ENCODE measurements at regions of chr15 and their contacts with region 1.

Region 1: GRCh38 chr15:42207674-42208579 is at the start of gene VPS39:
- DNase-seq: peak; percentile 86
- ATAC-seq: peak; percentile 97
- H3K4me3 ChIP-seq: peak within 1 kb of the TSS; percentile 83 to 97 (median 92)
- H3K4me3 Mint-ChIP-seq: peak within 1 kb of the TSS; percentile 85
- H3K27ac ChIP-seq: peak within 1 kb of the TSS; percentile 59 to 91
- H3K27ac Mint-ChIP-seq: peak within 1 kb of the TSS; percentile 91
- H3K4me1 ChIP-seq: peaks cover 20 to 22% of the 10 kb centered on the region in 2 donors
- H3K4me1 Mint-ChIP-seq: peaks cover 36% of the 10 kb centered on the region
- H3K27me3 ChIP-seq: no peaks in the 10 kb centered on the region
- H3K27me3 Mint-ChIP-seq: no peaks in the 10 kb centered on the region
- CTCF ChIP-seq: no peak
- total RNA-seq, gene VPS39: 145 and 149 TPM in 2 replicates

Region 2: DNA sequence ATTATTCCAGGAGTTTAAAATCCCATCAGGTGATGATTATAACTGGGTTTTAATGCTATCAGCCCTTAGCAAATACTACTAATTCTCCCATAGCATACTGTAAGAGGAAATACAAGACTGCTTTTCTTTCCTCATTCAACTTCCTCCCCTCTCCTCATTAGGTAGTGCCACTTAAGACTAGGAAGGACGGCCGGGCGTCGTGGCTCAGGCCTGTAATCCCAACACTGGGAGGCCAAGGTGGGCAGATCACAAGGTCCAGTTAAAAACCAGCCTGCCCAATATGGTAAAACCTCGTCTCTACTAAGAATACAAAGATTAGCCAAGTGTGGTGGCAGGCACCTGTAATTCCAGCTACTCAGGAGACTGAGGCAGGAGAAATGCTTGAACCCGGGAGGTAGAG is 820.3 kb before region 1 on chr15:
- CTCF ChIA-PET with region 1: no interaction called
- POLR2A ChIA-PET with region 1: no interaction called
- intact Hi-C with region 1: no loop called
- DNase-seq: no peak
- ATAC-seq: no peak
- H3K4me3 ChIP-seq: no peak overlapping the region
- H3K4me3 Mint-ChIP-seq: no peak overlapping the region
- H3K27ac ChIP-seq: no peak overlapping the region
- H3K27ac Mint-ChIP-seq: no peak overlapping the region
- H3K4me1 ChIP-seq: no peaks in the 10 kb centered on the region
- H3K4me1 Mint-ChIP-seq: peaks cover 4% of the 10 kb centered on the region
- H3K27me3 ChIP-seq: no peaks in the 10 kb centered on the region
- H3K27me3 Mint-ChIP-seq: no peaks in the 10 kb centered on the region
- CTCF ChIP-seq: no peak

Region 3: DNA sequence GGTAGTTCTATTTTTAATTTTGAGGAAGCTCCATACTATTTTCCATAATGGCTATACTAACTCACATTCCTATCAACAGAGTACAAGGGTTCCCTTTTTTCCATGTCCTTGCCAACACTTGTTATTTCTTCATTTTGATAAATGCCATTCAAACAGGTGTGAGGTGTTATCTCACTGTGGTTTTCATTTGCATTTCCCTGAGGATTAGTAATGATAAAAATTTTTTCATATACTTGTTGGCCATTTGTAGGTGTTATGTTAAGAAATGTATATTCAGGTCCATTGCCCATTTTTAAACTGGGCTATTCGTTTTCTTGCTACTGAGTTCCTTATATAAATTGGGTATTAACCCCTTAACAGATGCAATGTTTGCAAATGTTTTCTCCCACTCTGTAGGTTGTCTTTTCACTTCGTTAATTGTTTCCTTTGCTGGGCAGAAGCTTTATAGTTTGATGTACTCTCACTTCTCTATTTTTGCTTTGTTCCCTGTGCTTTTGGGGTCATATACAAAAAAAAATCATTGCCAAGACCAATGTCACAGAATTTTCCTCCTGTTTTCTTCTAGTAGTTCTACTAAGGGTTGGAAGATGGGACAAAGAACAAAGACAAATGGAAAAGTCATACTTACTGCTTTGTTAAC is 11.1 kb after region 1 on chr15:
- CTCF ChIA-PET with region 1: interaction called, 3 read pairs
- POLR2A ChIA-PET with region 1: no interaction called
- intact Hi-C with region 1: loop called (anchors 1 kb)
- DNase-seq: peak; percentile 52
- ATAC-seq: peak; percentile 75
- H3K4me3 ChIP-seq: no peak overlapping the region
- H3K4me3 Mint-ChIP-seq: peak overlapping the region; percentile 7
- H3K27ac ChIP-seq: peak overlapping the region; percentile 11 to 64
- H3K27ac Mint-ChIP-seq: peak overlapping the region; percentile 18
- H3K4me1 ChIP-seq: peaks cover 11 to 19% of the 10 kb centered on the region in 2 donors
- H3K4me1 Mint-ChIP-seq: peaks cover 23% of the 10 kb centered on the region
- H3K27me3 ChIP-seq: no peaks in the 10 kb centered on the region
- H3K27me3 Mint-ChIP-seq: no peaks in the 10 kb centered on the region
- CTCF ChIP-seq: no peak